PC-9 (cell line): ENCODE measurements at regions of chr20 and their contacts with region 1.

Region 1: DNA sequence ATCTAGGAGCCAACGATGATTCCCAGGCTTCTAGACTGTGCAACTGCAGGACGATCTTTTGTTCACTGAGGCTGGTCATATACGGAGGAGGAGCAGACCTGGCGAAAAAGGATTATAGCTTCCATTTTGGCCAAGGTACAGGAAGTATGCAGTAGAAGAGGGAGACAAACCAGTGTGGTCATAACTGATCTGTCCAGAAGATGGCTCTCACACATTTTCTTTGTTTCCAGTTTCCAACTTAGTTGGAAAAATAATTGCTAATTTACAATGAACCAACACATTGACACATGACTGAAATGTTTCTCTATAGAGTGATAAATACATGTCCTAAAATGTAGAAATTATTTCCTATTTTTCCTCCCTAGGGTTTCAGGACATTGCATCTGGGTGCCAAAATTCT is 364.1 kb upstream of the BTBD3 start:
- DNase-seq: no peak
- H3K4me3 ChIP-seq: no peak overlapping the region
- H3K27ac ChIP-seq: no peak overlapping the region
- H3K4me1 ChIP-seq: no peaks in the 10 kb centered on the region
- H3K27me3 ChIP-seq: no peaks in the 10 kb centered on the region
- CTCF ChIP-seq: peak; percentile 62

Region 2: GRCh38 chr20:12482661-12483060 is 929.1 kb after region 1 on chr20:
- CTCF ChIA-PET with region 1: no interaction called
- POLR2A ChIA-PET with region 1: no interaction called
- intact Hi-C with region 1: loop called (anchors 5 kb)
- DNase-seq: no peak
- H3K4me3 ChIP-seq: no peak overlapping the region
- H3K27ac ChIP-seq: no peak overlapping the region
- H3K4me1 ChIP-seq: no peaks in the 10 kb centered on the region
- H3K27me3 ChIP-seq: no peaks in the 10 kb centered on the region
- CTCF ChIP-seq: no peak